Stomach (tissue), 19 donors: ENCODE measurements at regions of chr7 and their contacts with region 1.

Region 1: DNA sequence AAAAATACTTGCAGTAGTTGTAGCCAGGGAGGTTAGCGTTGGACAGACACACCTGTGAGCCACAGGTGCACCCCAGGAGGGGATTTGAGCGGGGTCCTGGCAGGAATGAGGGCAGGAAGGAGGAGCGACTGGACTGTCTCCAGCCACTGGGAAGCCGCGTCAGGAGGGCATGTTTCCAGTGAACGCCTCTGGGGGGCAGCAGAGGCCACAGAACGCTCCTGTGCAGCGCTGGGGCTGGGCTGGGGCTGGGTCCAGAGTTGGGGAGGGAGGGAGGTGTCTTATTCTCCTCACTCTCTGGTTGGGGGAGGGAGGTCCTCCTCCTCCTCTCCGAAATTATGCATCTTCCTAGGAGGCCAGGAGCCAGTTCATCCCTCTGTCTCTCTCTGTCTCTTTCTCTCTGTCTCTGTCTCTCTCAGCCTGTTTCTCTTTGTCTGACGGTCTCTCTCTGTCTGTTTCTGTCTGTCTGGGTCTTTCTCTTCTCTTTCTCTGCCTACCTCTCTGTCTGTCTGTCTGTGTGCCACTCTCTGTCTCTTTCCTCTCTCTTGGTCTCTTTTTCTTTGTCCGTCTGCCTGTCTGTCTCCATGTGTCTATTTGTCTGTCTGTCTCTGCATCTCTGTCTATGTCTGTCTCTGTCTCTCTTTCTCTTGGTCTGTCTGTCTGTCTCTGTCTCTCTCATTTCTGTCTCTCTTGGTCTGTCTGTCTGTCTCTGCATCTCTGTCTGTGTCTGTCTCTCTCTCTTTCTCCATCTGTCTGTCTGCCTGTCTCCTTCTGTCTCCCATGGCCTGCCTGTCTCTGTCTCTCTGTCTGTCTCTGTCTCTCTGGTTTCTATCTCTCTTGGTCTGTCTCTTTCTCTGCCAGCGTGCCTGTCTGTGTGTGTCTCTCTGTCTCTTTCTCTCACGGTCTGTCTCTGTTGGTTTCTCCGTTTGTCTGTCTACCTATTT is 9.9 kb upstream of the PSMG3 start:
- DNase-seq: peak; percentile 74 to 88
- H3K4me3 ChIP-seq: no peak overlapping the region
- H3K27ac ChIP-seq: no peak overlapping the region
- H3K4me1 ChIP-seq: peaks cover 0 to 8% (median 2%) of the 10 kb centered on the region in 4 donors
- H3K27me3 ChIP-seq: no peaks in the 10 kb centered on the region
- CTCF ChIP-seq: peak in 5 of 7 experiments; percentile 52 to 84 (median 70)
- EP300 ChIP-seq: no peak
- POLR2A ChIP-seq: no peak

Region 2: GRCh38 chr7:1494447-1494846 is 85.3 kb before region 1 on chr7:
- intact Hi-C with region 1: no loop called
- DNase-seq: no peak
- H3K4me3 ChIP-seq: no peak overlapping the region
- H3K27ac ChIP-seq: no peak overlapping the region
- H3K4me1 ChIP-seq: no peaks in the 10 kb centered on the region
- H3K27me3 ChIP-seq: no peaks in the 10 kb centered on the region
- CTCF ChIP-seq: no peak
- EP300 ChIP-seq: no peak
- POLR2A ChIP-seq: no peak

Region 3: GRCh38 chr7:2214636-2215035 is 634.9 kb after region 1 on chr7:
- intact Hi-C with region 1: loop called (anchors 10 kb)
- DNase-seq: no peak
- H3K4me3 ChIP-seq: no peak overlapping the region
- H3K27ac ChIP-seq: no peak overlapping the region
- H3K4me1 ChIP-seq: peaks cover 0 to 4% (median under 1%) of the 10 kb centered on the region in 4 donors
- H3K27me3 ChIP-seq: no peaks in the 10 kb centered on the region
- CTCF ChIP-seq: no peak
- EP300 ChIP-seq: no peak
- POLR2A ChIP-seq: no peak

Region 4: DNA sequence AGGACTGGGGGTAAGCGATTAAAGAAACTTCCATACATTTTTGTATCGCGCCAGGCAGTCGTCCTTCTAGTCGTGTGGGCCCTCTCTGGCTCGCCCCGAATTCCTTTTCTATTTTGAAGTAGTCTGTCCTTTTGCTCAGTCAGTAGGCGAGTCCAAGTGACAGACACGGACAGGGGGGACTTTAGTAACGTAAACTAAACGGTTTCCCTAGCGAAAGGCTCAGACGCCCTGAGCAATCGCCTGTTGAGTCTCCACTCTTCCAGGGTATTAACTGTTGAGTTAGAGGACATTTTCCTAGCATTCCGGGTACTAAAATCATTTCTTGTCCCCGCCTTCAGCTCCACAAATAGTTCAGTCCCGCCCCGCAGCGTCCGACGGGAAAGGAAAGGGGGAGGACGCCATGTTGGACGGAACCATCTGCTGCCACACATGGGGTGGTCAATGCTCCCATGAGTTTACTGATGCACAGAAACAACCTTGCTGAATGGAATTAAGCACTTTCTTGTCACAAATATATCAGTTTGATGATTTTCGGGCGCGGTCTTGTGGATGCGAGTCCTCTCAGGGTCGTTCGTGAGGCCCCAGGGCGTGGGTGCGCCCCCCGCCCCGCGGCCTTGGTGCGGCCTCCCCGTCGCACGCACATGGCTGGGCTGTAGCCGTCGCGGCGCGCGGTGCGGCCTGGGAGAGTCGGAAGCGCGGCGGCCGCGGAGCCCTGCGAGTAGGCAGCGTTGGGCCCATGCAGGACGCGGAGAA is 774.6 kb after region 1 on chr7 and contains the start of gene EIF3B:
- intact Hi-C with region 1: loop called (anchors 10 kb)
- DNase-seq: peak; percentile 90 to 97
- H3K4me3 ChIP-seq: peak within 1 kb of the TSS; percentile 88 to 100 (median 100)
- H3K27ac ChIP-seq: peak within 1 kb of the TSS; percentile 94 to 100 (median 97)
- H3K4me1 ChIP-seq: peaks cover 33 to 54% (median 49%) of the 10 kb centered on the region in 4 donors
- H3K27me3 ChIP-seq: no peaks in the 10 kb centered on the region
- CTCF ChIP-seq: peak in 1 of 7 experiments; percentile 24
- EP300 ChIP-seq: no peak
- POLR2A ChIP-seq: no peak
- total RNA-seq, gene EIF3B: 115 to 373 (median 150) TPM